IMR-90 (cell line): ENCODE measurements at regions of chr20 and their contacts with region 1.

Region 1: GRCh38 chr20:20237093-20237959 is 130.6 kb upstream of the INSM1 start:
- DNase-seq: peak; percentile 14
- ATAC-seq: peak; percentile 88
- H3K4me3 ChIP-seq: no peak overlapping the region
- H3K27ac ChIP-seq: no peak overlapping the region
- H3K4me1 ChIP-seq: no peaks in the 10 kb centered on the region
- H3K27me3 ChIP-seq: peaks cover 2% of the 10 kb centered on the region
- CTCF ChIP-seq: peak; percentile 65
- POLR2A ChIP-seq: no peak
- RAD21 ChIP-seq: peak; percentile 49

Region 2: GRCh38 chr20:20076297-20077065 is 160.8 kb before region 1 on chr20:
- CTCF ChIA-PET with region 1: no interaction called
- POLR2A ChIA-PET with region 1: no interaction called
- dilution Hi-C with region 1: no loop called
- in situ Hi-C with region 1: loop called (anchors 10 kb)
- intact Hi-C with region 1: no loop called
- DNase-seq: peak; percentile 70
- ATAC-seq: peak; percentile 69
- H3K4me3 ChIP-seq: no peak overlapping the region
- H3K27ac ChIP-seq: no peak overlapping the region
- H3K4me1 ChIP-seq: no peaks in the 10 kb centered on the region
- H3K27me3 ChIP-seq: peaks cover 33% of the 10 kb centered on the region
- CTCF ChIP-seq: no peak
- POLR2A ChIP-seq: no peak
- RAD21 ChIP-seq: no peak

Region 3: GRCh38 chr20:20225325-20226043 is 11.8 kb before region 1 on chr20:
- CTCF ChIA-PET with region 1: interaction called, 10 read pairs
- POLR2A ChIA-PET with region 1: no interaction called
- dilution Hi-C with region 1: no loop called
- in situ Hi-C with region 1: no loop called
- intact Hi-C with region 1: no loop called
- DNase-seq: no peak
- ATAC-seq: no peak
- H3K4me3 ChIP-seq: no peak overlapping the region
- H3K27ac ChIP-seq: no peak overlapping the region
- H3K4me1 ChIP-seq: no peaks in the 10 kb centered on the region
- H3K27me3 ChIP-seq: no peaks in the 10 kb centered on the region; the same call in 1 of the 2 replicates
- CTCF ChIP-seq: no peak
- POLR2A ChIP-seq: no peak
- RAD21 ChIP-seq: no peak